ENCODE measurements at regions of chr3 and their contacts with region 1.

Region 1: DNA sequence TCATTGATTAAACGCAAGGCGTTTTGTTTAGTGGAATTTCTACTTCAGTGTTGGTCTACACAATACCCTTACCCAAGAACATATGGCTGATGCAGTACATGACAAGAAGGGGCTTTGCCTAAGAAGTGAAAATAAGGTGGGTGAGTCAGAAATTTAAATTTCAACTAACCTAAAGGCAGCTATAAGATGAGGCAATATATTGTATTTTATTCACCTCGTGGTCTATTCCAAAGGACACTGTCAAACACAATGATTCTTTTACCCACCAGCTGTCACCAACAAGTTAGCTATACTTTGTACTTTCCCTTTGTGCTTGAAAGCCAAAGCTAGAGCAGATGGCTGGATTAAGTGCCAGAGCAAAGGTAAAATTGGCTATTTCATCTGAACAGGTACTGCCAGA is 10.9 kb upstream of the SETMAR start:
- DNase-seq: no peak
- H3K4me3 ChIP-seq: no peak overlapping the region
- H3K27ac ChIP-seq: no peak overlapping the region
- H3K4me1 ChIP-seq: no peaks in the 10 kb centered on the region
- H3K27me3 ChIP-seq: no peaks in the 10 kb centered on the region
- CTCF ChIP-seq: no peak
- EP300 ChIP-seq: no peak
- POLR2A ChIP-seq: no peak
- RAD21 ChIP-seq: no peak

Region 2: GRCh38 chr3:3200632-3201212 is 1091.6 kb before region 1 on chr3:
- CTCF ChIA-PET with region 1: interaction called, 19 read pairs
- POLR2A ChIA-PET with region 1: no interaction called
- DNase-seq: no peak
- H3K4me3 ChIP-seq: no peak overlapping the region
- H3K27ac ChIP-seq: no peak overlapping the region
- H3K4me1 ChIP-seq: no peaks in the 10 kb centered on the region; a peak in 1 of 7 replicates
- H3K27me3 ChIP-seq: no peaks in the 10 kb centered on the region
- CTCF ChIP-seq: peak in 2 of 3 experiments; percentile 62 to 74; a peak in 3 of 4 replicates
- EP300 ChIP-seq: no peak
- POLR2A ChIP-seq: no peak
- RAD21 ChIP-seq: peak; percentile 95